Activated B cell treated with CpG ODN at 0.5 μM for 24 hours (primary cell): ENCODE measurements at regions of chr11 and their contacts with region 1.

Region 1: DNA sequence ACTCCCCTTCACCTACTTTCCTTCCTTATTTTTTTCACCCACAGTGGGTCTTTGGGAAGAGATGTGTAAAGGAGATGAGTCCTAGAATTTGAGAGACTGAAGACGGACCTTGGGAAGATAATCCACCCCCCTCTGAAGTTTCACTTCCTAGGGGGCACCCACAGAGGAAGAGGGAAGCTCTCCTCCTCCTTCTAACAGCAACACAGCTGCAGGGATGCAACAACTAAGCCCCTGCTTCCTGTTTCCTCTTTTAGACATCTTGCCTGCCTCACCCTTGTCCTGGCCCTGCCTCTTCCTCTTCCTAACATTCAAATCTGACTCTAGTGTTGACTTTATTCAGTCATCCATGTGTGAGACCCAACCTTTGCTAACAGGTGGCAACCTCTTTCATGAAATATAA is 424.6 kb downstream of the BUD13 start:
- DNase-seq: no peak
- ATAC-seq: no peak
- H3K4me3 Mint-ChIP-seq: no peak overlapping the region
- H3K27ac Mint-ChIP-seq: no peak overlapping the region
- H3K4me1 Mint-ChIP-seq: no peaks in the 10 kb centered on the region
- H3K27me3 Mint-ChIP-seq: no peaks in the 10 kb centered on the region
- CTCF ChIP-seq: no peak

Region 2: DNA sequence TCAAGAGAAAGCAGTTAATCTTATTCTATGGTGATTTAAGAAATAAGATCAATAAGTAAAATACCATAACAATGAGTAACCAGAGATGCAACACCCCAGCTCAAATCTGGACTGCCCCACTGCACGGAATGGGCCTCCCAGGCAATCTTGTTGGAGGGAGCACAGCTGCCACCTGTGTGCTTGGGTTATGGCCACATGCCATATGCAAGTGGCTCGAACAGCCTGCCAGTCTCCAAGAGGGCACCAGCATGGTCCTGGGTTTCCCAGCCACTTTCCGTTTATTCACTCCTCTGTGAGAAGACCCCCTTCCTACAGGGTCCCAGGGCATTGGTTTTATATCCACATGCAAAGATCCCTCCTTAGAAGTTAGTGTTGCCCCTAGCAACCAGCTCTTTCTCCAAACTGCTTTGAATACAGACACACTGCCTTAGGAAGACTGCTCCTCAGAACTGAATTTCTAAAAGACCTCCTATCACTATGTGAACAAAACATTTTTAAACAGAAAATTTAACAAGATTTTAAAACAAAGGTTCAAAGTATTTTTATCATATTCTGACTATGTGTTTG is 63.2 kb before region 1 on chr11:
- CTCF ChIA-PET with region 1: no interaction called
- POLR2A ChIA-PET with region 1: no interaction called
- intact Hi-C with region 1: loop called (anchors 2 kb)
- DNase-seq: no peak
- ATAC-seq: no peak
- H3K4me3 Mint-ChIP-seq: no peak overlapping the region
- H3K27ac Mint-ChIP-seq: no peak overlapping the region
- H3K4me1 Mint-ChIP-seq: no peaks in the 10 kb centered on the region
- H3K27me3 Mint-ChIP-seq: no peaks in the 10 kb centered on the region
- CTCF ChIP-seq: no peak

Region 3: GRCh38 chr11:116333001-116333616 is 15.1 kb before region 1 on chr11:
- CTCF ChIA-PET with region 1: no interaction called
- POLR2A ChIA-PET with region 1: no interaction called
- intact Hi-C with region 1: no loop called
- DNase-seq: no peak
- ATAC-seq: no peak
- H3K4me3 Mint-ChIP-seq: no peak overlapping the region
- H3K27ac Mint-ChIP-seq: no peak overlapping the region
- H3K4me1 Mint-ChIP-seq: no peaks in the 10 kb centered on the region
- H3K27me3 Mint-ChIP-seq: peaks cover 3% of the 10 kb centered on the region
- CTCF ChIP-seq: no peak

Region 4: GRCh38 chr11:116360221-116360941 is 12.2 kb after region 1 on chr11:
- CTCF ChIA-PET with region 1: no interaction called
- POLR2A ChIA-PET with region 1: no interaction called
- intact Hi-C with region 1: no loop called
- DNase-seq: no peak
- ATAC-seq: no peak
- H3K4me3 Mint-ChIP-seq: no peak overlapping the region
- H3K27ac Mint-ChIP-seq: no peak overlapping the region
- H3K4me1 Mint-ChIP-seq: no peaks in the 10 kb centered on the region
- H3K27me3 Mint-ChIP-seq: peaks cover 6% of the 10 kb centered on the region
- CTCF ChIP-seq: no peak

Region 5: GRCh38 chr11:116397602-116398084 is 49.4 kb after region 1 on chr11:
- CTCF ChIA-PET with region 1: no interaction called
- POLR2A ChIA-PET with region 1: no interaction called
- intact Hi-C with region 1: no loop called
- DNase-seq: no peak
- ATAC-seq: no peak
- H3K4me3 Mint-ChIP-seq: no peak overlapping the region
- H3K27ac Mint-ChIP-seq: no peak overlapping the region
- H3K4me1 Mint-ChIP-seq: no peaks in the 10 kb centered on the region
- H3K27me3 Mint-ChIP-seq: no peaks in the 10 kb centered on the region
- CTCF ChIP-seq: no peak